HepG2 (cell line): ENCODE measurements at regions of chr15 and their contacts with region 1.

Region 1: DNA sequence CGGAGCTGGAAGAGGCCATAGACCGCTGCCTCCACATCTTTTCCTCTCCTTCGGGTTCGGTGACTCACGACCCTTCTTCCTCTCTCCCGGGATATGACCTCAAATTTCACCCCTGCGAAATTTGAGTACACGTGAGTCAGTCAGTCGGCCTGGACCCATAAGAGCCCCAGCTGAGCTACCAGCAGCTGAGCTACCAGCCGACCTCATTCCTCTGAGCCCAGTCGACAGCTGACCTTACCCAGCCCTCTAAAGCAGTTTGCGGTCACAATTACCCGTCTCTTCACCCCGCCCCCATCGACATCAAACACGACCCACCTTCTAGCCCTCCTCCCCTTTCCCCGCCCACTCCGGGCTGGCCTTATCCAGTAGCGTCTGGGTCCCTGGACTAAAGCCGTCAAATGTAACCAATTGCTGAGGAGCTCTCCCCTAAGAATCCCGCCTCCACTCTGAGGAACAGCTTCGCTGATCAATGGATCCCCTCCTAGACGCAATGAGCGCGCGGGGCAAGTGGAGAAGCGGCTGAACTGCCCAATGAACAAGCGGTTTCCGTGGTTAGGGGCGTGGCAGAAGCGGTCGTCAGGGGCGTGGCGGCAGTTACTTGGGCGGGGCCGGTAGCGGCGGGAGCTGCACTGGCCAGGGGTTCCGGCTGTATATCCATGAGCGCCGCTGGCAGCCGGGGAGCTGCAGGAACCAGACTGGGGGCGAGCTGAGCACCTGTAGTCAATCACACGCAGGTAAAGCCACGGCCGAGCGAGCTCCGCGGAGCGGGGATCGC is at the start of gene ABHD2:
- DNase-seq: peak; percentile 100
- ATAC-seq: peak; percentile 98
- H3K4me3 ChIP-seq: peak within 1 kb of the TSS; percentile 69 to 94 (median 84)
- H3K27ac ChIP-seq: peak within 1 kb of the TSS; percentile 49
- H3K4me1 ChIP-seq: peaks cover 77% of the 10 kb centered on the region
- H3K27me3 ChIP-seq: no peaks in the 10 kb centered on the region
- CTCF ChIP-seq: no peak; the same call in 1 of the 2 replicates
- EP300 ChIP-seq: no peak
- POLR2A ChIP-seq: peak; percentile 57 to 75
- RAD21 ChIP-seq: peak; percentile 42
- total RNA-seq, gene ABHD2: 12.2 and 22.4 TPM in 2 replicates

Region 2: GRCh38 chr15:89003865-89004725 is 83.9 kb before region 1 on chr15:
- CTCF ChIA-PET with region 1: no interaction called
- POLR2A ChIA-PET with region 1: no interaction called
- in situ Hi-C with region 1: no loop called
- intact Hi-C with region 1: no loop called
- DNase-seq: peak; percentile 41
- ATAC-seq: peak; percentile 99
- H3K4me3 ChIP-seq: peak overlapping the region in 1 of 3 experiments; percentile 16; a peak in 1 of 6 replicates
- H3K27ac ChIP-seq: no peak overlapping the region
- H3K4me1 ChIP-seq: peaks cover 21% of the 10 kb centered on the region
- H3K27me3 ChIP-seq: peaks cover 0 to 4% of the 10 kb centered on the region in 2 experiments; a peak in 3 of 5 replicates
- CTCF ChIP-seq: peak; percentile 81
- EP300 ChIP-seq: no peak
- POLR2A ChIP-seq: no peak
- RAD21 ChIP-seq: peak; percentile 48; the same call in 1 of the 2 replicates

Region 3: GRCh38 chr15:89071466-89071865 is 16.6 kb before region 1 on chr15:
- CTCF ChIA-PET with region 1: no interaction called
- POLR2A ChIA-PET with region 1: interaction called, 12 read pairs
- in situ Hi-C with region 1: no loop called
- intact Hi-C with region 1: no loop called
- DNase-seq: no peak
- ATAC-seq: peak; percentile 39; the same call in 2 of the 3 replicates
- H3K4me3 ChIP-seq: no peak overlapping the region
- H3K27ac ChIP-seq: no peak overlapping the region
- H3K4me1 ChIP-seq: peaks cover 44% of the 10 kb centered on the region
- H3K27me3 ChIP-seq: no peaks in the 10 kb centered on the region; a peak in 1 of 5 replicates
- CTCF ChIP-seq: no peak
- EP300 ChIP-seq: no peak
- POLR2A ChIP-seq: no peak
- RAD21 ChIP-seq: no peak

Region 4: DNA sequence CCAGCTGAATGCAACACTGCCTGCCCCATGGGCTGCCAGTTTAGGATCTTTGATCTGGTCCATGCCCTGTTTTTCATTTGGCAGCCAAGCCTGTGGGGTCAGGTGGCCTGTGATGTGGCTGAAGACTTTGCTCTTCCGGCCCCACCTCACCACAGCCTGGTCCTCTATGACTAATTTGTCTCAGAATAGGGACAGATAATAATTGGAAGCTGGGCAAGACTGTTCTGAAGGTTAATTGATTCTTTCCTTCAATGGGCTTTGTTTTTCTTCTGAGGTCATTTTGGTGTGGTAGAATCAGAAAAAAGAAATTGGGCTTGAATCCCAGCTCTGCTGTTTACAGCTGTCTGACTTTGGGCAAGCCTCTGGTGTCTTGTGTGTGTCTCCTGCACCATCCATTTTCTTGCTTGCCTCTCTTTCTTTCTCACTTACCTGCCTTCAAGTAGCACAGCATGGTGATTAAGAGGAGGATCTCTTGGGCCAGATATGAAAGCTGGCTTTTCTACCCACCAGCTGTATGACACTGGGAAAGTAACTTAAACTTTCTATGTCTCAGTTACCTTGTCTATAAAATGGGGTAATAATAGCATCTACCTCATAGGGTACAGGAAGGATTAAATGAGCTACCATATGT is 24.4 kb after region 1 on chr15:
- CTCF ChIA-PET with region 1: no interaction called
- POLR2A ChIA-PET with region 1: interaction called, 16 read pairs
- in situ Hi-C with region 1: no loop called
- intact Hi-C with region 1: no loop called
- DNase-seq: peak; percentile 77
- ATAC-seq: peak; percentile 93
- H3K4me3 ChIP-seq: no peak overlapping the region
- H3K27ac ChIP-seq: peak overlapping the region; percentile 69
- H3K4me1 ChIP-seq: peaks cover 78% of the 10 kb centered on the region
- H3K27me3 ChIP-seq: no peaks in the 10 kb centered on the region
- CTCF ChIP-seq: no peak
- EP300 ChIP-seq: peak in 1 of 2 experiments; percentile 83; a peak in 3 of 4 replicates
- POLR2A ChIP-seq: no peak
- RAD21 ChIP-seq: no peak

Region 5: GRCh38 chr15:89129123-89129815 is 41.3 kb after region 1 on chr15:
- CTCF ChIA-PET with region 1: no interaction called
- POLR2A ChIA-PET with region 1: interaction called, 41 read pairs
- in situ Hi-C with region 1: no loop called
- intact Hi-C with region 1: no loop called
- DNase-seq: no peak
- ATAC-seq: no peak
- H3K4me3 ChIP-seq: peak overlapping the region in 1 of 3 experiments; percentile 4; a peak in 1 of 6 replicates
- H3K27ac ChIP-seq: peak overlapping the region; percentile 76
- H3K4me1 ChIP-seq: peaks cover 100% of the 10 kb centered on the region
- H3K27me3 ChIP-seq: no peaks in the 10 kb centered on the region
- CTCF ChIP-seq: peak; percentile 75
- EP300 ChIP-seq: no peak
- POLR2A ChIP-seq: no peak
- RAD21 ChIP-seq: peak; percentile 77

Region 6: DNA sequence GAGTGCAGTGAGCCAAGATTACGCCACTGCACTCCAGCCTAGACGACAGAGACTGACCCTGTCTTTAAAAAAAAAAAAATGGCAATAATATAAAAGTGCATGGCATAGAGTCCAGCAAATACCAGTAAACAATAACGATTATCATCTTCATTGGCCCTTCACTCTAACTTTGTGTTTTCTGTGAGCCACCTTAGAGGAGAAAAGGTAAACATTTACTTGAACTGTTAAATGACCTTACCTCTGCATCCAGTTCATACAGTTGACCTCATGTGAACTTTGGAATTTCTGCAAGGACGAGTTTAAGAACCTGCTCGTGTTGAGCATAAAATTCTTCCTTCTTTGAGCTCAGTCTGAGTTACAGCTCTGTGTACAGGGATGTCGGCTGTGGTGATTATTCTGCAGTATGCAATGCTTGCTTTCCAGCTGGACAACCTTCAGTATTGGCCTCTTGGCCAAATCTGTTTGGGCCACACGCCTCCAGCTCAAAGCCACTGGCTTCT is 76.7 kb after region 1 on chr15:
- CTCF ChIA-PET with region 1: no interaction called
- POLR2A ChIA-PET with region 1: interaction called, 13 read pairs
- in situ Hi-C with region 1: no loop called
- intact Hi-C with region 1: no loop called
- DNase-seq: peak; percentile 47
- ATAC-seq: peak; percentile 94
- H3K4me3 ChIP-seq: no peak overlapping the region
- H3K27ac ChIP-seq: peak overlapping the region; percentile 65
- H3K4me1 ChIP-seq: peaks cover 65% of the 10 kb centered on the region
- H3K27me3 ChIP-seq: no peaks in the 10 kb centered on the region
- CTCF ChIP-seq: no peak
- EP300 ChIP-seq: peak in 1 of 2 experiments; percentile 43; a peak in 1 of 4 replicates
- POLR2A ChIP-seq: no peak
- RAD21 ChIP-seq: no peak